Gastrocnemius medialis (tissue), 4 donors: ENCODE measurements at regions of chr7 and their contacts with region 1.

Region 1: GRCh38 chr7:2555121-2556052 is at the start of gene BRAT1:
- DNase-seq: peak; percentile 93 to 95
- ATAC-seq: peak; percentile 87 to 90
- H3K4me3 ChIP-seq: peak within 1 kb of the TSS; percentile 76 to 97 (median 80)
- H3K27ac ChIP-seq: peak within 1 kb of the TSS; percentile 86 to 100 (median 98)
- H3K4me1 ChIP-seq: peaks cover 29 to 32% of the 10 kb centered on the region in 2 donors
- H3K27me3 ChIP-seq: no peaks in the 10 kb centered on the region
- CTCF ChIP-seq: peak in 4 of 5 experiments; percentile 18 to 57 (median 19)
- POLR2A ChIP-seq: peak; percentile 63 to 64
- total RNA-seq, gene BRAT1: 15.3 to 36.4 (median 20.2) TPM

Region 2: GRCh38 chr7:2314209-2314955 is 241.0 kb before region 1 on chr7 and contains the start of gene SNX8:
- in situ Hi-C with region 1: no loop called
- intact Hi-C with region 1: loop called (anchors 5 kb)
- DNase-seq: peak; percentile 80
- ATAC-seq: peak; percentile 93 to 96
- H3K4me3 ChIP-seq: peak within 1 kb of the TSS; percentile 75 to 90 (median 78)
- H3K27ac ChIP-seq: peak within 1 kb of the TSS; percentile 63 to 80 (median 74)
- H3K4me1 ChIP-seq: no peaks in the 10 kb centered on the region
- H3K27me3 ChIP-seq: no peaks in the 10 kb centered on the region
- CTCF ChIP-seq: peak in 1 of 5 experiments; percentile 6
- POLR2A ChIP-seq: peak; percentile 44 to 64
- total RNA-seq, gene SNX8: 6.4 to 28.1 (median 24.8) TPM

Region 3: DNA sequence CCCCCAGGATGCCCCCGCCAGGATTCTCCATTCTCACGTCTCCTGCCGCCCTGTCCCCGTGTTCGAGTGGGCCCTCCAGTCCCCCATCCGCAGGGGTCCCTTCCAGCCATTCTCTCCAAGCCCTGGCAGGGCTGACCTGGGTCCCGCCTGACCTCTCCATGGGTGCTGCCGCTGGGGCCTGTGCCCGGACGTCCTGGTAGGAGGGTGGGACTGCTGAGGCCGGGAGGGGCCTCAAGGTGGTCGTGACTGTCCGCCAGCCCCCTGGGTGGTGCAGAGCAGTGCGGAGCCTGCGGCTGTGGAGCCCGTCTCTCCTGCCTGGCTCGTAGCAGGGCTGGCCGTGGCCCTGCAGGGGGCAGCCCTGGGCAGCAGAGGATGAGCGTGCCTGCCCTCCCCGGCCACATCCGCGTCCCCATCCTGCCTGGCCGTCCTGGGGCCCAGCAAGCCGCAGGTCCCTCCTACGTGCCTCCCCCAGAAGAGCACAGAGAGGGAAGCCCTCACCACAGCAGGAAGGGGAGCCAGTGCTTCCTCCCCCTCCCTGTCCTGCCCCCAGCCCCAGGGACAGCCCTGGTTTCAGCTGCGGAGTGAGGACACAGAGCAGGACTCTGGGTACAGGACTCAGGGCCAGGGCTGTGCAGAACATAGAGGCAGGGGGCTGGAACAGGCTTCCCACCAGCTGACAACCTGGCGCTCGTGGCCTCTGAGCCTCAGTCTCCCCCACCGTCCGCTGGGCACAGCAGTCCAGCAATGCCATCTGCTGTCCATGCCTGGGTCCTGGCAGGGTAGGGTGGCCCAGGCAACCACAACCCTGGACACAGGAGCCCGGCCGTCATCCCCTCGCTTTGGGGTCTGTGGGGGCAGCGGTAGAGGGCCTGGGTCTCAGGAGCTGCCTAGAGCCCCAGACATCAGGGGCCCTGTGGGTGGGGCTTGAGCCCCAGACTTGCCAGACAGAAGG is 77.7 kb before region 1 on chr7:
- in situ Hi-C with region 1: no loop called
- intact Hi-C with region 1: loop called (anchors 5 kb)
- DNase-seq: no peak
- ATAC-seq: peak; percentile 28 to 37
- H3K4me3 ChIP-seq: no peak overlapping the region
- H3K27ac ChIP-seq: no peak overlapping the region
- H3K4me1 ChIP-seq: peaks cover 13 to 14% of the 10 kb centered on the region in 2 donors
- H3K27me3 ChIP-seq: peaks cover 32 to 60% (median 35%) of the 10 kb centered on the region in 3 donors
- CTCF ChIP-seq: peak; percentile 25 to 76 (median 63)
- POLR2A ChIP-seq: no peak

Region 4: GRCh38 chr7:2631946-2632732 is 76.8 kb after region 1 on chr7 and contains the start of gene TTYH3:
- in situ Hi-C with region 1: no loop called
- intact Hi-C with region 1: loop called (anchors 2 kb)
- DNase-seq: no peak
- ATAC-seq: peak; percentile 20 to 28
- H3K4me3 ChIP-seq: peak within 1 kb of the TSS; percentile 57 to 76 (median 68)
- H3K27ac ChIP-seq: peak within 1 kb of the TSS; percentile 65 to 76 (median 71)
- H3K4me1 ChIP-seq: peaks cover 31 to 43% of the 10 kb centered on the region in 2 donors
- H3K27me3 ChIP-seq: no peaks in the 10 kb centered on the region
- CTCF ChIP-seq: no peak
- POLR2A ChIP-seq: peak in 1 of 2 donors; percentile 58
- total RNA-seq, gene TTYH3: 2.9 to 14.8 (median 5.2) TPM